SK-N-SH (cell line): ENCODE measurements at regions of chr7 and their contacts with region 1.

Region 1: DNA sequence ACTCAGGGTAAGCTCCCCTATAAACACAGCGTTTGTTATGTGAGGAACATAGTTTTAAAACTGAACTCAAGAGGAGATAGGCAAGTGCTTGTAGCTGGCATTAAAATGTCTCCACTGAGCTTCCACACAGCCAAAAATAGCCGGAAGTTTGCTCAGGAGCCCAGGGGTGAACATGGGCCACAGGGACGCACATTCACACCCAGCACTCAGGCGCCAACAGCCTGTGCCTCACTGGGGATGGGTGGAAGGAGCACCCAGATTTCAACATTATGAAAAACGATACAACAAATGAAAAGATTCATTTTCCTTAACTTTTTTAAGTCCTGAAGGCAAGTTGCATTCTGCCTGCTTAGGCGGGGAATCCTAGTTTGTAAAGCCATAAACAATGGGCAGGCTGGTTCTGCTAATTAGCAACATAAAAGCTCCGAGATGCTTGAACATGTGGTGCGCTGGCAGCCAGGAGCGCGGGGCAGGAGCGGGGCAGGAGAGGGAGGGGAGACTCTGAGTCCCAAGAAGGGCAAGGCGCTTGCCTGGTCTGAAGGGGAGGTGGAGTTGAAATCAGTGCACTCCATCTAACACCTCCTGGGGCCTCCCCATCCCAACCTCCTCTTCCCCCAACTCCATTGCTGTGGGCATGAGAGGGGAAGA is 235.9 kb downstream of the COBL start:
- DNase-seq: no peak
- H3K4me3 ChIP-seq: no peak overlapping the region
- H3K27ac ChIP-seq: no peak overlapping the region
- H3K4me1 ChIP-seq: no peaks in the 10 kb centered on the region; a peak in 1 of 4 replicates
- H3K27me3 ChIP-seq: peaks cover 93% of the 10 kb centered on the region
- CTCF ChIP-seq: no peak
- EP300 ChIP-seq: no peak
- RAD21 ChIP-seq: no peak

Region 2: DNA sequence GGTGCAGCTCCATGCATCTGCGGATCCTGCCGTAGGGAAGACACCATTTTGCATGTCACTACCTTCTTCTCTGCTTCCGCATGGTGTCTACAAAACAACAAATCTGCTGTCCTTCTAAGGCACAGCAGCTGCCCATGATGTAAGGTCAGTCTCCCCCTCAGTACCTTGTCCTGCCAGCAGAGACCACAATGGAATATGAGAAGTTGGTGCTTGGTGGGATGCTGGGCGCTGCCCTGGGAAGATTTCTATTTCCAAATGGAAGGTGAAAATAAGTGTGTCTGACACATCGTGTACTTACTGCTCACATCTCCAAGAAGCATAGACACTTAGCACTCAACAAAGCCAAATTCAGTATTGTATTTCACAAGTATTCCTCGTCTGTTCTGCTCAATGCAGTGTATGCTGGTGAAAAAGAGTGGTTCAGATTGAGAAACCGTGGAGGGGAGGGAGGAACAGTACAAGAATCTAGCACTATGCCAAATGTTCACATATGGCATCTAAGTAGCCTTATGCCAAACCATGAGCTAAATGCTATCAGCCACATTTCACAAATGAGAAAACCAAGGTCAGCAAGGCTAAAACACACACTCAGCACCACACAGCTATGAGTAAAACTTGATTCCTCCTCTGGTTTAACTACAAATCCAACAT is 393.0 kb before region 1 on chr7:
- CTCF ChIA-PET with region 1: no interaction called
- POLR2A ChIA-PET with region 1: no interaction called
- DNase-seq: no peak
- H3K4me3 ChIP-seq: no peak overlapping the region
- H3K27ac ChIP-seq: no peak overlapping the region
- H3K4me1 ChIP-seq: peaks cover 0 to 10% of the 10 kb centered on the region in 2 experiments; a peak in 1 of 4 replicates
- H3K27me3 ChIP-seq: no peaks in the 10 kb centered on the region
- CTCF ChIP-seq: no peak
- EP300 ChIP-seq: no peak
- RAD21 ChIP-seq: no peak

Region 3: DNA sequence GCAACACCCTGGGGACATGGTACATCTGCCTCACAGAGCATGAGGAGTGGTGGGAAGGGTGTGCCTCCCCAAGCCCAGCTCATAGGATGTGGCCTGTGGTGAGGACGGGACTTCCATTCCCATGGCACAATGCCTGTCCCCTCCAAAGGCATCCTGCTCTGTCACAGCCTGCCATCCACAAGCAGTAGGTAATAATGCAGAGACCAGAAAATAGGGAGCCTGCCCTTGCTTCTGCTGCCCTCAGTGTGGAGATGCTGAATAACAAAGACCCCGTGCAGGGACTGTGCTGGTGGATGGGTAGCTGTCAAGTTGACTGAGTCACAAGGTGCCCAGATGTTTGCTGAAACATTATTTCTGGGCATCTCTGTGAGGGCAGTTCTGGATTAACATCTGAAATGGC is 98.1 kb before region 1 on chr7:
- CTCF ChIA-PET with region 1: no interaction called
- POLR2A ChIA-PET with region 1: no interaction called
- DNase-seq: no peak
- H3K4me3 ChIP-seq: no peak overlapping the region
- H3K27ac ChIP-seq: no peak overlapping the region
- H3K4me1 ChIP-seq: no peaks in the 10 kb centered on the region
- H3K27me3 ChIP-seq: peaks cover 81% of the 10 kb centered on the region
- CTCF ChIP-seq: peak; percentile 29; the same call in 1 of the 2 replicates
- EP300 ChIP-seq: no peak
- RAD21 ChIP-seq: no peak

Region 4: DNA sequence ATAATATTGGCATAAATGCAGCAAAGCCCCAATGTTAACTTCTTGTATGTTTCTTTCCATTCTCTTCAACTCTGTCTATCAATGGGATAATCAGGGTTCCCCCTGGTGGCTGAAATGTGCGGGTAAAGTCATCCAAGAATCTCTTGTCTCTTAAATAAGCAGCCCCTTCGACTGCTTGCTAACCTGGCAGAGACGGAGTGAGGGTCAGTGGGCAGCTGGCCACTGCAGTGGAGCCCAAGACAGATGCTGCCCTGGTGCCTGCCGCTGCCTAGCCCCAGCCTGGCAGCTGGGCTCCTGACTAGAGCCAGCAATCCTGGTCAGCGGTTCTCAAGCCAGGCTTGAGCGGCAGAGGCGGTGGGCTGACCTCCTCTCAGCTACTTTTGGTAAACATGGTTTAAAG is 13.0 kb before region 1 on chr7:
- CTCF ChIA-PET with region 1: interaction called, 13 read pairs
- POLR2A ChIA-PET with region 1: no interaction called
- DNase-seq: peak; percentile 59
- H3K4me3 ChIP-seq: peak overlapping the region in 1 of 2 experiments; percentile 21; a peak in 1 of 4 replicates
- H3K27ac ChIP-seq: no peak overlapping the region
- H3K4me1 ChIP-seq: no peaks in the 10 kb centered on the region; a peak in 1 of 4 replicates
- H3K27me3 ChIP-seq: peaks cover 35% of the 10 kb centered on the region; the same call in 1 of the 2 replicates
- CTCF ChIP-seq: peak; percentile 98
- EP300 ChIP-seq: no peak
- RAD21 ChIP-seq: peak; percentile 68